HCT116 (cell line): ENCODE measurements at regions of chr2 and their contacts with region 1.

Region 1: GRCh38 chr2:197777823-197778407 is 7.2 kb downstream of the BOLL start:
- DNase-seq: peak; percentile 16
- ATAC-seq: no peak
- H3K4me3 ChIP-seq: no peak overlapping the region
- H3K27ac ChIP-seq: no peak overlapping the region
- H3K4me1 ChIP-seq: no peaks in the 10 kb centered on the region
- H3K27me3 ChIP-seq: no peaks in the 10 kb centered on the region
- CTCF ChIP-seq: peak; percentile 43 to 78 (median 55); a peak in 4 of 6 replicates
- POLR2A ChIP-seq: no peak
- RAD21 ChIP-seq: peak; percentile 81

Region 2: GRCh38 chr2:196750982-196751635 is 1026.8 kb before region 1 on chr2:
- CTCF ChIA-PET with region 1: no interaction called
- POLR2A ChIA-PET with region 1: no interaction called
- RAD21 ChIA-PET with region 1: no interaction called
- intact Hi-C with region 1: loop called (anchors 5 kb)
- DNase-seq: peak; percentile 51
- ATAC-seq: peak; percentile 98
- H3K4me3 ChIP-seq: no peak overlapping the region
- H3K27ac ChIP-seq: no peak overlapping the region
- H3K4me1 ChIP-seq: no peaks in the 10 kb centered on the region
- H3K27me3 ChIP-seq: no peaks in the 10 kb centered on the region
- CTCF ChIP-seq: peak; percentile 76 to 90 (median 90); a peak in 5 of 6 replicates
- POLR2A ChIP-seq: no peak
- RAD21 ChIP-seq: peak; percentile 59

Region 3: GRCh38 chr2:197113275-197113711 is 664.6 kb before region 1 on chr2:
- CTCF ChIA-PET with region 1: no interaction called
- POLR2A ChIA-PET with region 1: no interaction called
- RAD21 ChIA-PET with region 1: no interaction called
- intact Hi-C with region 1: loop called (anchors 5 kb)
- DNase-seq: peak; percentile 18
- ATAC-seq: peak; percentile 54; the same call in 1 of the 2 replicates
- H3K4me3 ChIP-seq: no peak overlapping the region
- H3K27ac ChIP-seq: no peak overlapping the region
- H3K4me1 ChIP-seq: no peaks in the 10 kb centered on the region
- H3K27me3 ChIP-seq: no peaks in the 10 kb centered on the region
- CTCF ChIP-seq: peak; percentile 45 to 72 (median 48)
- POLR2A ChIP-seq: no peak
- RAD21 ChIP-seq: peak; percentile 71

Region 4: GRCh38 chr2:197388866-197389587 is 388.9 kb before region 1 on chr2:
- CTCF ChIA-PET with region 1: interaction called, 5 read pairs
- POLR2A ChIA-PET with region 1: no interaction called
- RAD21 ChIA-PET with region 1: no interaction called
- intact Hi-C with region 1: loop called (anchors 5 kb)
- DNase-seq: no peak
- ATAC-seq: no peak
- H3K4me3 ChIP-seq: no peak overlapping the region
- H3K27ac ChIP-seq: no peak overlapping the region
- H3K4me1 ChIP-seq: no peaks in the 10 kb centered on the region
- H3K27me3 ChIP-seq: no peaks in the 10 kb centered on the region
- CTCF ChIP-seq: no peak
- POLR2A ChIP-seq: no peak
- RAD21 ChIP-seq: no peak

Region 5: GRCh38 chr2:197705121-197705911 is 72.6 kb before region 1 on chr2 and contains the start of gene MARS2:
- CTCF ChIA-PET with region 1: interaction called, 3 read pairs
- POLR2A ChIA-PET with region 1: no interaction called
- RAD21 ChIA-PET with region 1: no interaction called
- intact Hi-C with region 1: loop called (anchors 1 kb)
- DNase-seq: peak; percentile 77
- ATAC-seq: peak; percentile 87
- H3K4me3 ChIP-seq: peak within 1 kb of the TSS; percentile 78 to 89
- H3K27ac ChIP-seq: peak within 1 kb of the TSS; percentile 66
- H3K4me1 ChIP-seq: peaks cover 11 to 19% of the 10 kb centered on the region in 2 experiments; a peak in 3 of 4 replicates
- H3K27me3 ChIP-seq: no peaks in the 10 kb centered on the region
- CTCF ChIP-seq: no peak
- POLR2A ChIP-seq: peak; percentile 92
- RAD21 ChIP-seq: no peak
- total RNA-seq, gene MARS2: 14.4 TPM